Right ventricle myocardium inferior (tissue), 1 donor: ENCODE measurements at regions of chr15 and their contacts with region 1.

Region 1: DNA sequence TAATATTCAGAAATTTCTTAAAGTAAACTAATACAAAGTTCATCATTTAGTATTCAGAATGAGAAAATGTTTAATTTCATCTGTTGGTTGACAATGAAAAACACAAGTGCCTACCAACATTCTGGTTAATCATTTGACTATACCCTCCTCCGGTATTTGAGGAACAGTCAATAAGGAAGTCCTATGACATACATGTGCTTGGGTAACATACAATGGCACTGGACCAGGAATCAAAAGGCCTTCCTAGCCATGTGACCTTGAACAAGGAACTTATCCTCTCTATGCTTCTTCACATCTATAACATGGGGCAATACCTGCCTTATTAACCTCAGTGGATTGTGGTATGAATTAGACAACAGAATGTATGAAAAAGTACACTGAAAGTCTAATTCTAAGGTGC is 65.8 kb downstream of the ZNF280D start:
- DNase-seq: no peak
- ATAC-seq: no peak

Region 2: GRCh38 chr15:56587686-56588085 is 79.8 kb before region 1 on chr15:
- intact Hi-C with region 1: no loop called
- DNase-seq: no peak
- ATAC-seq: no peak

Region 3: DNA sequence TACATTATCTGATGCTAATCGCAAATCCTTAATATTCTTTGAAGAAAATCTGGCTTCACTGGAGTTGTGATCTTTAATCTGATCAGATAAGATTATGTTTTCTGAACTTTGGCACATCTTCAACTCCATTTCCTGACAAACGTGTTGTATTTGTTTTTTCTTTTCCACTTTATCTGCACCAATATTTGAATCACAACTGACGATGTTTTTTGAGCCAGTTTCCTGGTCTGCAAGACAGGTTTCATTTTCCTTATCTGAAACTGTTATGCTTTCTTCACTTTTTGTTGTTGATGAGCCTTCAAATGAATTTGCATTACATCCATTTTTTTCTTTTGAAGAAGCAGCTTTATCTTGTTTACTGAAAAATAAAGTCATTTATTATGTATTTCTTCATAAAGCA is 35.8 kb before region 1 on chr15:
- intact Hi-C with region 1: no loop called
- DNase-seq: no peak
- ATAC-seq: no peak

Region 4: GRCh38 chr15:56798639-56799038 is 131.1 kb after region 1 on chr15:
- intact Hi-C with region 1: loop called (anchors 10 kb)
- DNase-seq: no peak
- ATAC-seq: no peak